Cardiac septum (tissue), 1 donor: ENCODE measurements at regions of chr5 and their contacts with region 1.

Region 1: GRCh38 chr5:164475339-164475977 is 970.0 kb downstream of the MAT2B start:
- DNase-seq: no peak

Region 2: DNA sequence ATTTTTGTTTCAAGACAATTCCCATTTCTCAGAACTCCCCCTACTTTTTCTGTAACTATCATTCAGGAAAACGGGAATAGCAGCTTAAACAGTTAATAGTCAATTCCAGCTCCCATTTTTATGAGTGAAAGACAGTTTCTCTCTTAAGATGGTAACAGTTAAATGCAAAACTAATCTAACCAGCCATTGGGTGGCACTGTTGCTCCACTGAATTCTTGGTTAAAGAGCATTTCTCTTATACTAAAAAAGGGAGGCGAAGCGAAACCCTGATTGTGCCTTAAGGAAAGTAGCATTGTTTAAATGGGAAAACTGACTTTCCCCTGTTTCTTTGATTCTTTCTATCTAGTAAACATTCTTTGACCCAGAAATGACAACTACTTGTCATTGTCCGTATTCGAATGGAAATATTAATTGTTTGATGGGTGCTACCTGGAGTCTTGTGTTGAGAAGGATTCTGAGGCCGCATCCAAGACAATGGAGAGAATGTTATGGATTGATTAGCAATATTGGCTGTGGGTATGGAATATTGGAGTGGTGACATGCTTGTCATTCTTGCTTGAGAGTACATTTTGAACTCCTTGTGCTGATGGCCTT is 462.3 kb before region 1 on chr5:
- intact Hi-C with region 1: loop called (anchors 10 kb)
- DNase-seq: no peak

Region 3: GRCh38 chr5:164048359-164048926 is 427.0 kb before region 1 on chr5:
- intact Hi-C with region 1: loop called (anchors 5 kb)
- DNase-seq: no peak

Region 4: DNA sequence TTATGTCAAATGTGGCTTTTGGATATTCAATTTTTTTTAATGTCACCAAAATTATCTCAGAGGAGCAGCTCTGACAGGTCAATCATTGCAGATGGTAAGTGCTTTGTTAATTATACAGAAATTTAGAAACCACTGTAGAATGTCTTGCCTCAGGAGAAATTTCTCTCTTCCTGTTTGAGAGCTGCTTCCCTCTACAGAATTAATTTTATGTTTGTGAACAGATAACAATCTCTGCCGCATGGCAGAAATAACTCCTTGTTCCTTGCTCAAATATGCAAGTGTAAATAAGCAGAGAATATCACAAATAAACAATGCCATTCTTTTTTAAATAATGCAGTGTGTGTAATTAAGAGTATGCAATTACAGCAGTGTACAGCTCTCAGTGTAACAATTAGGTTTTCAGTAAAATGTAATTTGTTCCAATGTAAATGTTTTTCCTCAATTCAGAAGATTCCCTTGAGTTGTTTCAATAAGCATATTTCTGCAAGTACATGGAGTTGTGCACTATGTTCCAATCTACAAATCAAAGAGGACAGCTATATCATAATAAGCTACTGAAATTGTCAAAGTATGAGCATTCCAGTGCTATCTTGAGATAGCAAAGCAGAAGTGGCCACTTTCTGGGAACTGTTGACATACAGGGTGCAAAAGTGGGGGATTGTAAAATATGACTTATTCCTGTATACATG is 42.7 kb after region 1 on chr5:
- intact Hi-C with region 1: no loop called
- DNase-seq: no peak